Activated T-helper 1 cell treated with anti-CD3 and anti-CD28 coated beads, Interleukin-12 subunit alpha, Interleukin-12 subunit beta, Interleukin-2, Interleukin-4 antibody, amounts not matched to agents 30 ng/mL and 10 ng/mL and 1 ng/mL, durations not matched to agents 14 hours and 24 hours and 36 hours (primary cell): ENCODE measurements at regions of chr9 and their contacts with region 1.

Region 1: DNA sequence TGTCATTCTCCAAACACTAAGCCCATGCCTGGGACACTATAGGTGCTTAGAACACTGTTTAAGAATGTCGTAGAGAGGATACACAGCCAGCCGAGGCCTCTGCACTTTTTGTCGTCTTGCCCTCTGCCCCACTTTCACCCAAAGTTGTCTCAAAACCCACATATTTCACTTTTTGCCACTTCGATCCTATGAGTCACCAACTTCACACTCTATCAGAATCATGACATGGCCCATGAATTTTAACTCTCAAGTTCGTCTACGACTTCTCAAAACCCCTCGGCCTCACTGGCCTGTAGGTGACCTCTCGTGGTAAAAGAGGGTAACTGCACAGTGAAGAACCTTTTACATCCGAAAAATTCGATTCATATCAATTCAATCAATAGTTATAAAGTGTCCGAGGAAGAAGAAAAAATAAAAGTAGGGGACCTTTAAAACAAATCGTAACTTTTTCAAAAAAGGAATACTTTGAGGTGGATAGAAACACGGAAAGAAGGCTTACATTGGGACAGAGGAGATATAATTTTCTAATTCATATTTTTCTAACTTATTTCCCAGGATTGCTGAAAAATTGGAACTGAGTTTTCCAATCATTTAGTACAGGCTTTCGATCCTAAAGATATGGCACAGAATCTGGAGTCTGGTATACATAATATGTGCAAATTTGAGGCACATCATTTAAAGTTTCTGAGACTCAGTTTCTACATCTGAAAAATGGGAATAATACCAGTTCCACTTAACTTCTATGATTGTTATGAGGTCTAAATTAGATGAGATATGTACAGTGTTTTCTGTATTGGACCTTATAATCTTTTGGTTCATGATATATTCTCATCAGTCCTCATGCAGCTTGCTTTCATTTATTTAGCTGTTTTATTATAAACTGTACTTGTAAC is 122.6 kb downstream of the APBA1 start:
- DNase-seq: peak; percentile 3
- H3K4me3 Mint-ChIP-seq: no peak overlapping the region
- H3K27ac Mint-ChIP-seq: no peak overlapping the region
- H3K4me1 Mint-ChIP-seq: peaks cover 7% of the 10 kb centered on the region
- H3K27me3 Mint-ChIP-seq: peaks cover 33% of the 10 kb centered on the region

Region 2: GRCh38 chr9:69421908-69422801 is 127.4 kb before region 1 on chr9:
- intact Hi-C with region 1: loop called (anchors 1 kb)
- DNase-seq: peak; percentile 31
- H3K4me3 Mint-ChIP-seq: no peak overlapping the region
- H3K27ac Mint-ChIP-seq: no peak overlapping the region
- H3K4me1 Mint-ChIP-seq: no peaks in the 10 kb centered on the region
- H3K27me3 Mint-ChIP-seq: no peaks in the 10 kb centered on the region

Region 3: DNA sequence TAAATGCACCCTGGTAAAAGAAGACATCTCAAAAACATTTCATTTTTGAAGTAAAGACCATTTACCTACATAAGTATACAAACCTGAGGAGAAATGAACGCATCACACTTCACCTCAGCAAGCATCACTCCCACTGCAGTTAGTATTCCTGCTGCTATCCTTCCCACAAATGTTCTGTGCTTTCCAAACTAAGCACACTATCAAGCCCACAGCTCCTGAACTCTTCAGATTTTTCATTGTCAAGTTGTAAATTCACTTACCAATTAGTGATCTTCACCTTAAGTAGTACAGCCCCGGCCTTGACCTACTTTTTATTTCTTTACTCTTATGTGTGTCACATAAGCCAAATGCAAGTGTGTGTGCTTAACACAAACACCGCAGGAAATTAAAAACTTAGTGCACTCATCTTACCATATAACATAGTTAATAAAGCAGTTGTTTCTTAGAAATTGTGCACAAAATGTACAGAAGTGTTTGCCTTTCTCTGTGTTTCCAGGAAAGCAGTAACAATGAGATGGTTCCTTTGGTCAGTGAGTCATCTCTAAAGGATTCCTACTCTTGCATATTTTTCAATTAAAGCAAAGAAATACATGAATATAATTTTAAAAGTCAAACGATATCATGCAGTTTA is 46.8 kb before region 1 on chr9:
- intact Hi-C with region 1: loop called (anchors 5 kb)
- DNase-seq: no peak
- H3K4me3 Mint-ChIP-seq: peak overlapping the region; percentile 48
- H3K27ac Mint-ChIP-seq: peak overlapping the region; percentile 32
- H3K4me1 Mint-ChIP-seq: peaks cover 52% of the 10 kb centered on the region
- H3K27me3 Mint-ChIP-seq: no peaks in the 10 kb centered on the region

Region 4: DNA sequence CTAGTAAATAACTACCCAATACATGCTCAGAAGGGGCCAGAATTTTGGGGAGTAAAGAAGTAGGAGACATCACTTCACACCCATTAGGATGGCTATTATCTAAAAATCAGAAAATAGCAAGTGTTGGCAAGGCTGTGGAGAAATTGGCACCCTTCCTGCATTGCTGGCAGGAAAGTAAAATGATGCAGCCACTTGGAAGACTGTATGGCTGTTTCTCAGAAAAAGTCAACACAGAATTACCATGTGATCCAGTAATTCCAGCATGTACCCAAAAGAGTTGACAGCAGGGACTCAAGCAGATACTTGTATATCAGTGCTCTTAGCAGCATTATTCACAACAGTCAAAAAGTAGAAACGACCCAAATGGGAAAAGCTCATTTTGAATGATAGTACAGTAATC is 15.0 kb after region 1 on chr9:
- intact Hi-C with region 1: no loop called
- DNase-seq: no peak
- H3K4me3 Mint-ChIP-seq: no peak overlapping the region
- H3K27ac Mint-ChIP-seq: no peak overlapping the region
- H3K4me1 Mint-ChIP-seq: no peaks in the 10 kb centered on the region
- H3K27me3 Mint-ChIP-seq: peaks cover 8% of the 10 kb centered on the region

Region 5: GRCh38 chr9:69877854-69878514 is 328.4 kb after region 1 on chr9:
- intact Hi-C with region 1: loop called (anchors 5 kb)
- DNase-seq: no peak
- H3K4me3 Mint-ChIP-seq: no peak overlapping the region
- H3K27ac Mint-ChIP-seq: no peak overlapping the region
- H3K4me1 Mint-ChIP-seq: no peaks in the 10 kb centered on the region
- H3K27me3 Mint-ChIP-seq: peaks cover 7% of the 10 kb centered on the region